Esophagus muscularis mucosa (tissue), 4 donors: ENCODE measurements at regions of chr18 and their contacts with region 1.

Region 1: DNA sequence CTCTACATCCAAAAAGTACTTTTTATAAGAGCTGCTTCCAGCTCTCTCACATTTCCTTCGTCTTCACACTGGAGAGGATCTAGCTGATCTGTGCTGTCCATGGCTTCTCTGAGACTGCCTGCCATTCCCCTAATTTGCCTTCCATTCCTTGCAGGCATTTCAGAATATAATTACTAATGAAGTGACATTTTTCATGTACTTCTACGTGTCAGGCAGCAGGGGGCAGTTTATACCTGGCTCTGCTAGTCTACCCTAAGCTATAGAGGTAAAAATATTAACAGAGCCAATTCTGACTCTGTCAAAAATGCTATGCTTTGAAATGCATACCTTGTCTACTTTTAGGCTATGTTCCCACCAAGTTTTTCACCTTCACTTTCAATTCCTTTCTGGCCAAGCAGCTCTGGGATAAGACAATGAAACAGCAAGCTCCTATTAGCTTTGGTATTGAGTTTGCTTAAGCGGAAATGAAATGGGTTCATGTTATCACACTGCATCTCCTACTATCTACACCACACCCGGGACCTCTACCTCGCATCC is 81.9 kb downstream of the MEP1B start:
- DNase-seq: no peak
- H3K4me3 ChIP-seq: no peak overlapping the region
- H3K27ac ChIP-seq: no peak overlapping the region
- H3K4me1 ChIP-seq: peaks cover 0 to 8% (median 3%) of the 10 kb centered on the region in 4 donors
- H3K27me3 ChIP-seq: no peaks in the 10 kb centered on the region
- CTCF ChIP-seq: peak; percentile 69 to 70 (median 70)
- EP300 ChIP-seq: no peak
- POLR2A ChIP-seq: no peak

Region 2: GRCh38 chr18:32158108-32158624 is 113.6 kb before region 1 on chr18:
- intact Hi-C with region 1: loop called (anchors 5 kb)
- DNase-seq: peak; percentile 95
- H3K4me3 ChIP-seq: peak overlapping the region; percentile 27 to 50 (median 40)
- H3K27ac ChIP-seq: no peak overlapping the region
- H3K4me1 ChIP-seq: peaks cover 5 to 11% (median 8%) of the 10 kb centered on the region in 4 donors
- H3K27me3 ChIP-seq: no peaks in the 10 kb centered on the region
- CTCF ChIP-seq: peak; percentile 84 to 86 (median 85)
- EP300 ChIP-seq: no peak
- POLR2A ChIP-seq: no peak